H1 (cell line): ENCODE measurements at regions of chr5 and their contacts with region 1.

Region 1: DNA sequence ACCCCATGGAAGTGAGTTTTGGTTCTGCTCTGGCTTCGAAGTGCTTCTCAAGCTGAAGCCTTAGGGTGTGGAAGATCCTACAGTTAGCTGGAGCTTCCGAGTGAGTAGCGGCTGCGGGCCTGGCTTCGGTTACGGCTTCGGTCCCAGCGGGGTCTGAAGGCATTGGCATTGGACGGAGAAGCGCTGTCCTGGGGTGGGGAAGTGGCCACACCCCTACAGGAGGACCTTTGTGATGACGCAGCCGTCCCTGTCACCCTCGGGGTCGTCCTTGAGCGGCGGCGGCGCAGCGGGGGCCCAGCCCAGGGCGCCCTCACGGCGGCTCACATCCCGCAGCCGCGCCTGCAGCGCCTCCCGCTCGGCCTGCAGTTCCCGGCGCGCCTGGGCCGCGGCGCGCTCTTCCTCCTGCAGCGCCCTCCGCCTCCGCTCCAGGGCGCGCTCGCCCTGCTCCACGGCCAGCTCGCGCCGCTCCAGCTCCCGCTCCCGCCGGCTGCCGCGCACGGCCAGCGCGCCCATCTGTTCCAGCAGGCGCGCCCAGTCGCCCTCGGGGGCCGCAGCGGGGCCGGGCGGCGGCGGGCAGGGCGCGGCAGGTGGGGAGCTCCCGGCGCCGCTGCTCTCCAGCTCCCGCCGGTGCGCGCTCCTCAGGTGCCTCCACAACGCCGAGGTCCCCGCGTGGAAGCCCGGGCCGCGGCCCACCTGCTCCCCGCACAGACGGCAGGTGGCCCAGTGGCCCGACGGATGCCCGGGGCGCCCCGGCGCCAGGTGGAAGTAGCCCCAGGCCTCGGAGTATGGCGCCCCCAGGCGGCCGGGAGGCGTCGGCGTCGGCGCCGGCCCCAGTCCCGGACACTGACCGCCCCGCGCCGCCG is 9.9 kb downstream of the ZBED3 start:
- DNase-seq: peak in 1 of 2 experiments; percentile 94
- H3K4me3 ChIP-seq: peak overlapping the region; percentile 41 to 72 (median 63)
- H3K27ac ChIP-seq: no peak overlapping the region
- H3K4me1 ChIP-seq: no peaks in the 10 kb centered on the region; a peak in 2 of 7 replicates
- H3K27me3 ChIP-seq: peaks cover 0 to 4% (median 2%) of the 10 kb centered on the region in 4 experiments; a peak in 1 of 7 replicates
- CTCF ChIP-seq: peak; percentile 72 to 90 (median 82)
- EP300 ChIP-seq: peak in 1 of 2 experiments; percentile 47; a peak in 1 of 3 replicates
- POLR2A ChIP-seq: peak in 1 of 2 experiments; percentile 42; a peak in 1 of 3 replicates
- RAD21 ChIP-seq: peak; percentile 56 to 83; a peak in 3 of 4 replicates

Region 2: DNA sequence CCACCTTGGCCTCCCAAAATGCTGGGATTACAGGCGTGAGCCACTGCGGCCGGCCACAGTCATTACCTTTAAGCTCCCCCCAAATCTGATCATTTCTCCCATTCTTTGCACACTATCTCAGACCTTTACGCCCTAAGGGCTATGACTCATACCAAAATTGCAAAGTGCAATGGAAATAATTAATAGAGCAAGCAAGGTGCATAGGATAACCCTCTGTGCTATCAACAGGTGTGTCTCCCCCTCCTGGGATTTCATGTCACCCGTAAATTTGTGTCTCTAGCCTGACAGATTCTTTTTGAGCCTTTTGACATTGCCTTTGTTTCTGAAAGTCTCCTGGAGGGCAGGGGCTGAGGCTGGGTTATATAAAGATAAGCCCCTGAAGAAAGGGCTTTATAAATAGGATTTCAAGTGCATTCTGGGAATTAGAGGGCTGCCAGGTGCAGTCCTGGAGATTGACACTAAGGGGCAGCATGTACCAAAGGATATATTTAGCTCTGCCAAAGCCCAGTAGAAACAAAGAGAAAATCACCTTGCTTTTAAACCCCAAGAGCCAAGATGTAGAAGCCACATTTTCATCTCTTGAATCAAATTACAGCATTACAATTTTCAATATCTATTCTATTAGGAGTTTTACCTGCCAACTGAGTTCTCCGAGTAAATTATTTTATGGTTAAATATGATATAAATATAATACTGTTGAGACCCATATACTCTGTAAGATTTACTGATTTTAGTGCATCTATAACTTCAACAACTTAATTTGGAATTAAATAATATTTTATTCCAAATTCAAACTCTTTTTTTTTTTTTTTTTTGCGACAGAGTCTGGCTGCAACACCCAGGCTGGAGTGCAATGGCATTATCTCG is 209.1 kb before region 1 on chr5:
- CTCF ChIA-PET with region 1: interaction called, 10 read pairs
- POLR2A ChIA-PET with region 1: interaction called, 12 read pairs
- DNase-seq: peak; percentile 47 to 86
- H3K4me3 ChIP-seq: no peak overlapping the region
- H3K27ac ChIP-seq: no peak overlapping the region
- H3K4me1 ChIP-seq: peaks cover 0 to 4% (median 0%) of the 10 kb centered on the region in 4 experiments; a peak in 2 of 7 replicates
- H3K27me3 ChIP-seq: no peaks in the 10 kb centered on the region
- CTCF ChIP-seq: peak in 2 of 3 experiments; percentile 76 to 80; a peak in 3 of 4 replicates
- EP300 ChIP-seq: no peak
- POLR2A ChIP-seq: no peak
- RAD21 ChIP-seq: peak; percentile 97 to 99

Region 3: GRCh38 chr5:77066823-77067442 is 10.3 kb before region 1 on chr5:
- CTCF ChIA-PET with region 1: interaction called, 11 read pairs
- POLR2A ChIA-PET with region 1: interaction called, 10 read pairs
- DNase-seq: no peak
- H3K4me3 ChIP-seq: no peak overlapping the region
- H3K27ac ChIP-seq: no peak overlapping the region
- H3K4me1 ChIP-seq: peaks cover 0 to 4% (median 1%) of the 10 kb centered on the region in 4 experiments; a peak in 3 of 7 replicates
- H3K27me3 ChIP-seq: peaks cover 0 to 1% (median 0%) of the 10 kb centered on the region in 4 experiments; a peak in 1 of 7 replicates
- CTCF ChIP-seq: no peak
- EP300 ChIP-seq: no peak
- POLR2A ChIP-seq: no peak
- RAD21 ChIP-seq: no peak

Region 4: GRCh38 chr5:77101298-77101697 is 24.1 kb after region 1 on chr5:
- CTCF ChIA-PET with region 1: interaction called, 10 read pairs
- POLR2A ChIA-PET with region 1: no interaction called
- DNase-seq: no peak
- H3K4me3 ChIP-seq: no peak overlapping the region
- H3K27ac ChIP-seq: no peak overlapping the region
- H3K4me1 ChIP-seq: no peaks in the 10 kb centered on the region
- H3K27me3 ChIP-seq: no peaks in the 10 kb centered on the region
- CTCF ChIP-seq: no peak
- EP300 ChIP-seq: no peak
- POLR2A ChIP-seq: no peak
- RAD21 ChIP-seq: no peak